ENCODE measurements at regions of chr17 and their contacts with region 1.

Region 1: GRCh38 chr17:57855391-57856035 is 5.7 kb upstream of the MRPS23 start:
- DNase-seq: no peak
- H3K4me3 ChIP-seq: no peak overlapping the region
- H3K27ac ChIP-seq: no peak overlapping the region
- H3K4me1 ChIP-seq: peaks cover 7 to 54% (median 37%) of the 10 kb centered on the region in 4 experiments
- H3K27me3 ChIP-seq: peaks cover 0 to 2% (median 0%) of the 10 kb centered on the region in 5 experiments

Region 2: DNA sequence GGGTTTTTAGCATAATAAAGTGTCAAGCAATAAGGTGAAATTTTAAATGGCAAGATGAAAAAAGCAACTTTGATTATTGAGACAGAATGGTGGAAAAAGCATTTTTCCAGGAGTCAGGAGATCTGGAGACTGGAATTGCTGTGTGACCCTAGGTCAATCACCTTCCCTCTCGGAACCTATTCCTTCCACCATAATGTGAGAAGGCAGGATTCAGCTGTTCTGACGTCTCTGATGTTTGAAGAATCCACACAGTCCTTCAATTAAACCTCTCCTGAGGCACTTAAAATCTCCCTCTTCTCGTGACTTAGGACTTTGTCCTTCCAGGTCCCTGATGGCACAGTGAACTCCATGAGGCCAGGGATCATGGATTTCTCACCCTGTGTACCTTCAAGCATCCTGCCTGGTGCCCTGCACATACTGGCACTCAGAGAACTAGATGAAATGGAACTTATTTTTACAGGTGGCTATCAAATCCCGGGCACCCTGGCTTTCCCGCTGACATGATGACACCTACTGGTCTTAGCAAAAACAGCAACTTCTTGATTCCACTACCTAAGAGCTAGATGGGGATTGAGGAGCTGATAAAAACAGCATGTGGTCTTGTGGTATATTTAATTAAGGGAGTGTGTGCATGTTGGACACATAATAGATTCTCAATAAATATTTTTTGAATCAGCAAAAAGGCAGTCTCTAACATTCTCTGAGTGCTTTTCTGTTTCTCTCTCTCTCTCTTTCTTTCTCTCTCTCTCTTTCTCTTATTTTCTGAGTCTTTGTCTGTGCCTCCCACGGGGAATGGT is 108.1 kb before region 1 on chr17:
- CTCF ChIA-PET with region 1: no interaction called
- POLR2A ChIA-PET with region 1: no interaction called
- DNase-seq: peak; percentile 67 to 78 (median 74)
- H3K4me3 ChIP-seq: no peak overlapping the region
- H3K27ac ChIP-seq: no peak overlapping the region
- H3K4me1 ChIP-seq: peaks cover 5 to 52% (median 25%) of the 10 kb centered on the region in 4 experiments
- H3K27me3 ChIP-seq: no peaks in the 10 kb centered on the region

Region 3: DNA sequence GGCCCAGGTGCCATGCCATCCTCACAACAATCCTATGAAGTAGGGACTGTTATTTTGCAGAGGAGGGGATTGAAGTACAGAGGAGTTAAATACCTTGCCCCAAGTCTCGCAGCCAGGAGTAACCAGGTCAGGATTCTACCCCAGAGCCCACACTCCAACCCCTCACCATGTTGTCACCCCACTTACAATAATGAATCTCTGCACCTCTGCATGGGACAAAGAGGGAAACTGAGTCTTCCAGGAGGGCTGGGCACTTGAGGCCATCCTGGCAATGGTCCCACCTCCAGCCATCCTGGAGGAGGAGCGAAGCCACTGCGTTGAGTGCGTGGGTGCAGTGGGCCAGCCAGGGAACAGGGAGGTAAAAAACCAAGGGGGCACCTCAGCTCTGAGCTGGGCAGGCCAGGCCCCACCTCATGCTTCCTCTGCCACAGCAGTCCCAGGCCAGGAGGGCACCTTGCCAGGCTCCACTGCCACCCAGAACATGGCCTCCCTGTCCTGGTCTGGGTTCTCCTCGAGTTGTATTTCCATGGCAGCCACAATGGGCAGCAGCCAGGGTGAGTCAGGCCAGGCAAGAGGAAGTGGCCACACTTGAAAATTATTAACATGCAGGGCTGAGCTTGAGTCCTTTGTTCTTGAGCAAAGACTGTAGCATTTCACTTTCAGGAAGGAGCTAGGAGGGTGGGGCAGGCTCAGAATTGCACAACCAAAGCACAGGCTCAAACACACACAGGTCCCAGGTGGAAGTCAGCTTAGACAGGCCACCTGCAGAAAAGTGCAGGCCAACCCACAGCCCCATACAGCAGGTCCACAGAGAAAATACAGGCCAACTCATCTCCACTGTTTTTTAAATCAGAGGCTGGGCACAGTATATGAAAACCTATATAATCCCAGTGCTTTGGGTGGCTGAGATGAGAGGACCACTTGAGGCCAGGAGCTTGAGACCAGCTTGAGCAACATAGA is 47.6 kb after region 1 on chr17:
- CTCF ChIA-PET with region 1: interaction called, 16 read pairs
- POLR2A ChIA-PET with region 1: no interaction called
- DNase-seq: peak in 2 of 3 donors; percentile 69 to 74
- H3K4me3 ChIP-seq: peak overlapping the region in 4 of 7 experiments; percentile 13 to 30 (median 20)
- H3K27ac ChIP-seq: no peak overlapping the region
- H3K4me1 ChIP-seq: peaks cover 17 to 82% (median 67%) of the 10 kb centered on the region in 4 experiments
- H3K27me3 ChIP-seq: no peaks in the 10 kb centered on the region

Measured in common myeloid progenitor, CD34-positive (primary cell).